ENCODE measurements at regions of chr1 and their contacts with region 1.

Region 1: DNA sequence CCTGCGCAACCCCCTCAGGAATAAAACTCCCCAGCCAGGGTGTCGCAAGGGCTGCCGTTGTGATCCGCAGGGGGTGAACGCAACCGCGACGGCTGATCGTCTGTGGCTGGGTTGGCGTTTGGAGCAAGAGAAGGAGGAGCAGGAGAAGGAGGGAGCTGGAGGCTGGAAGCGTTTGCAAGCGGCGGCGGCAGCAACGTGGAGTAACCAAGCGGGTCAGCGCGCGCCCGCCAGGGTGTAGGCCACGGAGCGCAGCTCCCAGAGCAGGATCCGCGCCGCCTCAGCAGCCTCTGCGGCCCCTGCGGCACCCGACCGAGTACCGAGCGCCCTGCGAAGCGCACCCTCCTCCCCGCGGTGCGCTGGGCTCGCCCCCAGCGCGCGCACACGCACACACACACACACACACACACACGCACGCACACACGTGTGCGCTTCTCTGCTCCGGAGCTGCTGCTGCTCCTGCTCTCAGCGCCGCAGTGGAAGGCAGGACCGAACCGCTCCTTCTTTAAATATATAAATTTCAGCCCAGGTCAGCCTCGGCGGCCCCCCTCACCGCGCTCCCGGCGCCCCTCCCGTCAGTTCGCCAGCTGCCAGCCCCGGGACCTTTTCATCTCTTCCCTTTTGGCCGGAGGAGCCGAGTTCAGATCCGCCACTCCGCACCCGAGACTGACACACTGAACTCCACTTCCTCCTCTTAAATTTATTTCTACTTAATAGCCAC is 696 bp downstream of the TGFB2 start:
- DNase-seq: peak; percentile 89
- ATAC-seq: peak; percentile 53
- H3K4me3 ChIP-seq: peak overlapping the region; percentile 78
- H3K27ac ChIP-seq: peak overlapping the region; percentile 84
- H3K4me1 ChIP-seq: peaks cover 35% of the 10 kb centered on the region
- H3K27me3 ChIP-seq: no peaks in the 10 kb centered on the region
- CTCF ChIP-seq: no peak

Region 2: DNA sequence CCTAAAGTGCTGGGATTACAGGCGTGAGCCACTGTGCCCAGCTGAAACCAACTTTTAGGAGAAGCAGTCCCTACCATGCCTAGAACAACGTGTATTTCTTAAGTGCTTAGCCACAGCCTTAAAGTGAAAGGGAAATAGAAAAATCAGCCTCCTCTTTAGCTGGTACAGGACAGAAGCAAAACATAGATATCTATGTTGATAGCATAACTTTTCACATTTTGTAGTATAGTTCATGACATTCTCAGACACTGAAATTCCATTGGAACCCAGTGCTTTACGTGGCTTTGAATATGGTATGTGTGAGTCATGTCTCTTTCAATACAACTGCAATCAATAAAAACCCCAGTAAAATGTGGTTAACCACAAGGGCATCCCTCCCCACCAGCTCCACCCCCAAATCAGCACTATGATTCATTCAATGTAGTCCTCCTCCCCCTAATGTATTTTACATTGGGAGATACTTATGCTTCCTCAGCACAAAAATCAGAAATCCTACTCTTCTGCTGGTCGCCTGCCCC is 31.4 kb after region 1 on chr1:
- CTCF ChIA-PET with region 1: no interaction called
- POLR2A ChIA-PET with region 1: interaction called, 10 read pairs
- intact Hi-C with region 1: loop called (anchors 1 kb)
- DNase-seq: peak; percentile 100
- ATAC-seq: peak; percentile 64
- H3K4me3 ChIP-seq: peak overlapping the region; percentile 57
- H3K27ac ChIP-seq: peak overlapping the region; percentile 91
- H3K4me1 ChIP-seq: peaks cover 90% of the 10 kb centered on the region
- H3K27me3 ChIP-seq: no peaks in the 10 kb centered on the region
- CTCF ChIP-seq: no peak

Region 3: DNA sequence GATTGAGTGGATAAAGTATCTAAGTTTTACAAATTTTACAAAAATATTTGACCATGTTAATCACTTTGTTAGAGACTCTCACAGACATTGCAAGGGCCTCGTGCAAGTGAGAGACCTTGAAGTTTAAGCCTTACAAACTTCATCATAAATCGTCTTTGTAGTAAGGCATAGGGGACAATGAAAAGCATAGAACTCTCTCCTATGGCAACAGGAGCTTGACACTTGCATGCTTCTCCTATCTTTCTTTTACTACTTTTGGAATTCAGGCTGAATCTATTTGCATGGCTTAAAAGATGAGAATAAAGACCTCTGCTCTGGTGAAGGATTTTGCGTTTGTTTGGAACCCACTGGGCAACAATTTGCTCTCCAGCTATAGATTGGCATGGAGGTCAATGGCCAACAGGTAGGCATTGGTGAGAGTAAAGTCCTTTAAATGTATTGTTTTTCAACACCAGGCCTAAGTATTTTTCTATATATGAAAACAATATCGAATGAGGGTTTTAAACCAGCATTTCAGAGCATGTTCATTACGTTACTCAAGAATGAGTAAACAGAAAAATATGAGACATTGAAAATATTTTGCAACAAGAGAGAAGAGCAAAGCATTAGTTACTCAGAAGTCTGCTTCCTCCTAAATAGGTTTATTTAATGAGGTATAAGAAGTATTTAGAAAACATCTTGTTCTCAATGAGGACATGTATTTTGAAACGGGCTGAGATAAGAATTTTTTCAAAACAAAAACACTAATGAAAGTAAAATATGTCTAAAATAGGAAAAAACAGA is 191.5 kb after region 1 on chr1:
- CTCF ChIA-PET with region 1: no interaction called
- POLR2A ChIA-PET with region 1: no interaction called
- intact Hi-C with region 1: loop called (anchors 5 kb)
- DNase-seq: peak; percentile 90
- ATAC-seq: peak; percentile 84
- H3K4me3 ChIP-seq: peak overlapping the region; percentile 2; the same call in 1 of the 2 replicates
- H3K27ac ChIP-seq: peak overlapping the region; percentile 23
- H3K4me1 ChIP-seq: peaks cover 24% of the 10 kb centered on the region
- H3K27me3 ChIP-seq: no peaks in the 10 kb centered on the region
- CTCF ChIP-seq: no peak

Region 4: DNA sequence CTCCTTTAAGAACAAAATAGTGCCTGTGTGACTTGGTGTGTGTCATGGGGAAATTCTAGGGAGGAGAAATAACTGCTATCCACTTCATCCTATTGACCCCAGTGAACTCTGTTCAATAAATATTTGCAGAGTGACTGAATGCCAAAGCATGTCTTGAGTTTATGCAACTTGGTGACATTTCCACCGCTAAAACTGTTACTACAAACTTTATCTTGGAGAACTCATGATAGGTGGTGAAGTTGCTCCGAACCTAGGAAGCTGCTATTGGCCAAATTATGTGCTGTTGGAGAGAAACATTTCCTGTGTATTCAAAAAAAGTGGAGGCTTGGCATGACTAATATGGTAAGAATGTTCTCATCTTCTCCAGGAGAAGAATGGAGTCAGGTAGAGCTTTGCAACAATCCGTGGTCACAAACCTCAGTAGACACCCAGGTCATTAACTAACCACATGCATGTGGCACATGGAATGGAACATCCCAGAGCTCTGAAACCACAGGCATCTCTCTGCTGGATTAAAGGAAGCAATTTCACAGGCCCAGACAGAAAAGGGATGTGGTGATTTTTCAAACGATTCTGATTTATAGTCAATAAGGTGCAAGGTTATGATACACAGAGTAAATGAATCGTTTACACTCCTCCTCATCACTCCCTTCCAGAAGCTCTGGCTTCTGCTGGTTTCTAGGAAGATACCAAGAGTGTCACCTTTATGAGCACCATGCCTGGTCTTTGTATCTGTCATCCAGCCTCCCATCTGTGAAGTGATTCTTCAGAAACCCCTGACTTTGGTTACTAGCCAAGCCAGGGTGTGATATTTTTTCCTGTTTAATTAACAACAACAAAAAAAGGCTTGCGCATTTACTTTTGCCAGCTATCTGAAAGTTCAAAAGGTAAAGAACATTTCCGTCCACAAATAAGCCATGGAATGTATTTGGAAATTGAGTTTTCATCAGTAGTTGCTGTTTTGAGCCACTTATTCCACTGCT is 360.4 kb after region 1 on chr1:
- CTCF ChIA-PET with region 1: no interaction called
- POLR2A ChIA-PET with region 1: no interaction called
- intact Hi-C with region 1: loop called (anchors 1 kb)
- DNase-seq: peak; percentile 100
- ATAC-seq: peak; percentile 85
- H3K4me3 ChIP-seq: no peak overlapping the region
- H3K27ac ChIP-seq: peak overlapping the region; percentile 88
- H3K4me1 ChIP-seq: peaks cover 42% of the 10 kb centered on the region
- H3K27me3 ChIP-seq: no peaks in the 10 kb centered on the region
- CTCF ChIP-seq: no peak

Region 5: GRCh38 chr1:219088778-219089557 is 743.1 kb after region 1 on chr1:
- CTCF ChIA-PET with region 1: no interaction called
- POLR2A ChIA-PET with region 1: interaction called, 23 read pairs
- intact Hi-C with region 1: no loop called
- DNase-seq: peak; percentile 100
- ATAC-seq: peak; percentile 98
- H3K4me3 ChIP-seq: 0 out of 2 replicates have a peak overlapping the region, but pooled peaks have one; percentile 3
- H3K27ac ChIP-seq: peak overlapping the region; percentile 52
- H3K4me1 ChIP-seq: peaks cover 85% of the 10 kb centered on the region
- H3K27me3 ChIP-seq: no peaks in the 10 kb centered on the region
- CTCF ChIP-seq: no peak